Transverse colon (tissue), 4 donors: ENCODE measurements at regions of chr17 and their contacts with region 1.

Region 1: DNA sequence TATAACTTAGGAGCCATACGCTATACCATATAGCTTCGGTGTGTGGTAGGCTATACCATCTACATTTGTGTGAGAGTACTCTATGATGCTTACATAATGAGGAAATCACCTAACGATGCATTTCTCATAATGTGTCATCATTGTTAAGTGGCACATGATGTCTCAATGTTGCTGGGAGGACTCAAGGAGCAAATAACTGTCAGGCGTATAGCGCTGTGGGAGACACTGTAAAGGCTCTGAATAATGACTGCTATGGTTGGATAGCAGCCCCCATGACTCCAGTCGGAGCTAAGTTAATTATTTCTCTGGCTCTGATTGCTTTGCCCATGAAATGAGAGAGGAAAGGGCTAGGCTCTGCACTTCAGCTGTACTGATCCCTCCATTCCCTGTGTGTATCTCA is 197.2 kb downstream of the RGS9 start:
- DNase-seq: no peak
- H3K4me3 ChIP-seq: no peak overlapping the region
- H3K27ac ChIP-seq: no peak overlapping the region
- H3K4me1 ChIP-seq: no peaks in the 10 kb centered on the region
- H3K27me3 ChIP-seq: no peaks in the 10 kb centered on the region
- CTCF ChIP-seq: no peak
- EP300 ChIP-seq: no peak
- POLR2A ChIP-seq: no peak

Region 2: DNA sequence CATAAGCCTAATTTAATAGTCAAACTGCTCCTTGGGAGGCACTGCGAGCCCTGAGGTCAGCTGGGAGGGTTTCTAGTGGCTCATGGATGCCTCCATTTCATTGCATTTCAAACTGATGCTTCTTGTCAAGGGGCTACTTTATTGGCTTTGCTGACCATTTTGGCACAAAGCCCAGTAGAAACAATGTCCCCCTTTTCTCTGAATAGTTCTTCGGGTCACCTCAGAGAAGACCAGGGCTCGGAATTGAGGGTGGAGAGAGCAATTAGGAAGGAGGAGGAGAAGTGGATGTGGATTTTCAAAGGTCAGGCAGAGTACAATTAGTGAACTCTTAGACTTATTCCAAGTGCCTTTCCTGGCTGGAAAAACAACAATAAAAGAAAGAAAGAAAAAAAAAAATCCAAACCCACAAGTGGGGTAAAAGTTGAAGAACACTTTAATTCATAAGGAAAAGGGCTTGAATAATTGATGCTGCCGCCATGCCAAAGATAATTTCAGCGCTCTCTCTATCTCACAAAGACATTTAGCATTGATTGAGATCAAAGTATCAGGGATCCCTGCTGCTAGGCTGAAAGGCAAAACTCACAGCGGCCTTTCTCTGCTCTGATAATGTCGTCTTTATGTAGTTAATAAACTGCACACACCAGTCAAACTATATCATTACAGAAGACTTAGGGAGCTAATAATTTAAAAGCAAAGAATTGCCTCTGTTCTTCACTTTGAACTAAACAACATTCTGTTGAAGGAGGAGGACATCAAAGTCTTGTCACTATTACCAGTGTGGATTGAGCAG is 74.5 kb before region 1 on chr17:
- in situ Hi-C with region 1: no loop called
- intact Hi-C with region 1: loop called (anchors 2 kb)
- DNase-seq: no peak
- H3K4me3 ChIP-seq: no peak overlapping the region
- H3K27ac ChIP-seq: no peak overlapping the region
- H3K4me1 ChIP-seq: peaks cover 0 to 3% (median 0%) of the 10 kb centered on the region in 4 donors
- H3K27me3 ChIP-seq: peaks cover 3% of the 10 kb centered on the region
- CTCF ChIP-seq: no peak
- EP300 ChIP-seq: no peak
- POLR2A ChIP-seq: no peak

Region 3: DNA sequence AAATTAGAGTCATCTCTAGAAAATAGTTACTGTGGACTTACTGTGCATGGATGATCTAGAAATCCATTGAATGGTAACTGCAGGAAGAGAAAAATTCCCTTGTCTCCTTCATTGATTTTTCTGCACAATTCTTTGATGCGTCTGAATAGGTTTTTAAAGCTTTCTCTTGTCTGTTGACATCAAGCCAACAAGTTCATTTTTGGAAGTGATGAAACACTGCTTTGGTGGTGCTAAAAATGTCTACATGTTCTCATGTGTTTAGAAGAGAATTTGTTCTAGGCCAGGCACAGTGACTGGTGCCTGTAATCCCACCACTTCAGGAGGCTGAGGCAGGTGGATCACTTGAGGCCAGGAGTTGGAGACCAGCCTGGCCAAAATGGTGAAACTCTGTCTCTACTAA is 284.1 kb after region 1 on chr17:
- in situ Hi-C with region 1: no loop called
- intact Hi-C with region 1: no loop called
- DNase-seq: no peak
- H3K4me3 ChIP-seq: no peak overlapping the region
- H3K27ac ChIP-seq: no peak overlapping the region
- H3K4me1 ChIP-seq: no peaks in the 10 kb centered on the region
- H3K27me3 ChIP-seq: no peaks in the 10 kb centered on the region
- CTCF ChIP-seq: no peak
- EP300 ChIP-seq: no peak
- POLR2A ChIP-seq: no peak